ENCODE measurements at regions of chr19 and their contacts with region 1.

Region 1: DNA sequence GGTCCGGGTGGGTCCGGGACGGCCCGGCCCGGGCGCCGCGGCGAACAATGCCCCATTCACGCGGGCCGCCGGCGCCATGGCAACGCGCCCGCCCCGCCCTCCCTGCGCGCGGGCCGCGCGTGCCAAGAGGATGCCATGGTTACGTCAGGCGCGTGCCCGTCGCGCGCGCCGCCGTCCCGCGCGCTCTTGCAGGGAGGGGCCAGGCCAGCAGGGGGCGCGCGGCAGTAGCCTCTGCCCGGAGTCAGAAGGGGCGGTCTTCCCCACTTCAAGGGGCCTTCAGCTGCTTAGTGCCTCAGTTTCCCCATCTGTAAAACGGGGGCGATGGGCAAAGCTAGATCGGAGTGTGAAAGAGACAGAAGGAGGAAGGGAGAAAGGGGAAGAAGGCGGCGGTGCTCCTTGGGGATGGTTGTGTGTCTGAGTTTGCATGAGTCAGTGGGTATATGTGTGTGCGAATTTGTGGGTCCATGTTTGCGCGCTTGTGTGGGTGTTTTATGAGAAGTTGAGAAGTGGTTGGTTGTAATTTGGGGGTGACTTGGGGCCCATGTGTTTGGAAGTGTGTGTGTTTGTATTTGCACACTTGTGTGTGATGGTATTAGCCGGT is 11.6 kb upstream of the NFIX start:
- DNase-seq: no peak
- ATAC-seq: peak; percentile 71
- H3K4me3 ChIP-seq: 0 out of 2 replicates have a peak overlapping the region, but pooled peaks have one; percentile 16
- H3K27ac ChIP-seq: no peak overlapping the region
- H3K4me1 ChIP-seq: no peaks in the 10 kb centered on the region; the same call in 1 of the 2 replicates
- H3K27me3 ChIP-seq: peaks cover 0 to 3% of the 10 kb centered on the region in 2 experiments; a peak in 1 of 4 replicates
- CTCF ChIP-seq: peak; percentile 75 to 90 (median 81)
- EP300 ChIP-seq: no peak
- POLR2A ChIP-seq: no peak
- RAD21 ChIP-seq: peak; percentile 62

Region 2: GRCh38 chr19:12913851-12914690 is 69.6 kb before region 1 on chr19:
- CTCF ChIA-PET with region 1: no interaction called
- POLR2A ChIA-PET with region 1: no interaction called
- RAD21 ChIA-PET with region 1: no interaction called
- SMC1A ChIA-PET with region 1: no interaction called
- in situ Hi-C with region 1: no loop called
- intact Hi-C with region 1: no loop called
- DNase-seq: no peak
- ATAC-seq: peak; percentile 64; the same call in 2 of the 3 replicates
- H3K4me3 ChIP-seq: no peak overlapping the region
- H3K27ac ChIP-seq: no peak overlapping the region
- H3K4me1 ChIP-seq: peaks cover 10% of the 10 kb centered on the region
- H3K27me3 ChIP-seq: no peaks in the 10 kb centered on the region
- CTCF ChIP-seq: no peak
- EP300 ChIP-seq: no peak
- POLR2A ChIP-seq: peak; percentile 68
- RAD21 ChIP-seq: no peak

Region 3: GRCh38 chr19:12956446-12957388 is 26.9 kb before region 1 on chr19 and contains the start of gene GADD45GIP1:
- CTCF ChIA-PET with region 1: no interaction called
- POLR2A ChIA-PET with region 1: no interaction called
- RAD21 ChIA-PET with region 1: no interaction called
- SMC1A ChIA-PET with region 1: no interaction called
- in situ Hi-C with region 1: no loop called
- intact Hi-C with region 1: no loop called
- DNase-seq: peak; percentile 41
- ATAC-seq: peak; percentile 94
- H3K4me3 ChIP-seq: peak within 1 kb of the TSS; percentile 78
- H3K27ac ChIP-seq: peak within 1 kb of the TSS; percentile 71
- H3K4me1 ChIP-seq: peaks cover 11% of the 10 kb centered on the region
- H3K27me3 ChIP-seq: no peaks in the 10 kb centered on the region
- CTCF ChIP-seq: no peak
- EP300 ChIP-seq: no peak
- POLR2A ChIP-seq: peak; percentile 99
- RAD21 ChIP-seq: no peak
- polyA plus RNA-seq, gene GADD45GIP1: 5.1 to 13.4 TPM

Region 4: GRCh38 chr19:12994701-12995595 is 11.3 kb after region 1 on chr19 and contains the start of gene NFIX:
- CTCF ChIA-PET with region 1: no interaction called
- POLR2A ChIA-PET with region 1: no interaction called
- RAD21 ChIA-PET with region 1: no interaction called
- SMC1A ChIA-PET with region 1: no interaction called
- in situ Hi-C with region 1: no loop called
- intact Hi-C with region 1: no loop called
- DNase-seq: no peak
- ATAC-seq: peak; percentile 51
- H3K4me3 ChIP-seq: peak within 1 kb of the TSS; percentile 18; the same call in 1 of the 2 replicates
- H3K27ac ChIP-seq: no peak within 1 kb of the TSS
- H3K4me1 ChIP-seq: no peaks in the 10 kb centered on the region
- H3K27me3 ChIP-seq: peaks cover 4 to 6% of the 10 kb centered on the region in 2 experiments; a peak in 3 of 4 replicates
- CTCF ChIP-seq: no peak
- EP300 ChIP-seq: no peak
- POLR2A ChIP-seq: no peak
- RAD21 ChIP-seq: no peak
- polyA plus RNA-seq, gene NFIX: 0.02 TPM

Region 5: DNA sequence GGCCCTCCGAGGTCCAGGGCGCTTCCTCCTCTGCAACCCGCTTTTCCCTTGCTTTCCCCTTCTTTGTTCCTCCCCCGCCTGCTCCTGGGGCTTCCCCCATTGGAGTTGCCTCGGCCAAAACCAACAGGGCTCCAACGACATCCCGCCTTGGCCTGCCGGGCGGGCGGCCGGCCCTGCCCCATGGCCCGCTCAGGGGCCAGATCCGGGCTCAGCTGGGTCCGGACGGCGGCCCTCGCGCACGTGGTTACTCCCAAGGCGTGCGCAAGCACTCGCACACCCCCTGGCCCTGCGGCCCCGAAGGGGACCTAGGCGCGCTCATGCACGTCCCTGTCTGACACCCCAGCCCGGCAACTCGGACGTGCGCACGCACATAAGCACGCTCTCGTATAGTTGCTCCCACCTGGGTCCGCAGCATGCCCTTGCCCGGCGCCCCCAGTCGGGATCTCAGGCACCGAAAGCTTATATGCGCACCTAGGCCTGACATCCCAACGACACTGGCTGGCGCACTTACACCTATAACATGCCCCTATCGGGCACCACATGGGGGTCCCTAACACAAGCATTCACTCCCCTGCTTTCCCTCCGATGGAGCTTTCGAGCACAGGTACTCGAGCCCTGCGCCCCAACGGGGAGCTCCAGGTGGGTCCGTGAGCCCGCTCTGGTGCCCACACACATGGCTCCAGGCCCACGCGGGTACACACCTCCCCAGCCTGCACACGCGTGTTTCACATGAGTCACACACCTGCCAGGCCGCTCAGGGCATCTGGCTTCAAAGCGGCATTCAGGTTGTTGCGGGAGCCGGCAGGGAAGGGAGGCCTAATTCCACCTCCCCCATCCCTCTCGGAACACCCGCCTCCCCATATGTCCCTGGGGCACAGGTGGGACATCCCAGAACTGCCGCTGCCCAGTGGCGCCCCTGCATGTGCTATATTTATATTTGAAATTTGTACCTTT is 26.7 kb after region 1 on chr19:
- CTCF ChIA-PET with region 1: no interaction called
- POLR2A ChIA-PET with region 1: no interaction called
- RAD21 ChIA-PET with region 1: no interaction called
- SMC1A ChIA-PET with region 1: no interaction called
- in situ Hi-C with region 1: no loop called
- intact Hi-C with region 1: no loop called
- DNase-seq: no peak
- ATAC-seq: no peak
- H3K4me3 ChIP-seq: no peak overlapping the region
- H3K27ac ChIP-seq: no peak overlapping the region
- H3K4me1 ChIP-seq: peaks cover 6% of the 10 kb centered on the region; the same call in 1 of the 2 replicates
- H3K27me3 ChIP-seq: peaks cover 13 to 30% of the 10 kb centered on the region in 2 experiments
- CTCF ChIP-seq: no peak
- EP300 ChIP-seq: no peak
- POLR2A ChIP-seq: no peak
- RAD21 ChIP-seq: no peak

Region 6: DNA sequence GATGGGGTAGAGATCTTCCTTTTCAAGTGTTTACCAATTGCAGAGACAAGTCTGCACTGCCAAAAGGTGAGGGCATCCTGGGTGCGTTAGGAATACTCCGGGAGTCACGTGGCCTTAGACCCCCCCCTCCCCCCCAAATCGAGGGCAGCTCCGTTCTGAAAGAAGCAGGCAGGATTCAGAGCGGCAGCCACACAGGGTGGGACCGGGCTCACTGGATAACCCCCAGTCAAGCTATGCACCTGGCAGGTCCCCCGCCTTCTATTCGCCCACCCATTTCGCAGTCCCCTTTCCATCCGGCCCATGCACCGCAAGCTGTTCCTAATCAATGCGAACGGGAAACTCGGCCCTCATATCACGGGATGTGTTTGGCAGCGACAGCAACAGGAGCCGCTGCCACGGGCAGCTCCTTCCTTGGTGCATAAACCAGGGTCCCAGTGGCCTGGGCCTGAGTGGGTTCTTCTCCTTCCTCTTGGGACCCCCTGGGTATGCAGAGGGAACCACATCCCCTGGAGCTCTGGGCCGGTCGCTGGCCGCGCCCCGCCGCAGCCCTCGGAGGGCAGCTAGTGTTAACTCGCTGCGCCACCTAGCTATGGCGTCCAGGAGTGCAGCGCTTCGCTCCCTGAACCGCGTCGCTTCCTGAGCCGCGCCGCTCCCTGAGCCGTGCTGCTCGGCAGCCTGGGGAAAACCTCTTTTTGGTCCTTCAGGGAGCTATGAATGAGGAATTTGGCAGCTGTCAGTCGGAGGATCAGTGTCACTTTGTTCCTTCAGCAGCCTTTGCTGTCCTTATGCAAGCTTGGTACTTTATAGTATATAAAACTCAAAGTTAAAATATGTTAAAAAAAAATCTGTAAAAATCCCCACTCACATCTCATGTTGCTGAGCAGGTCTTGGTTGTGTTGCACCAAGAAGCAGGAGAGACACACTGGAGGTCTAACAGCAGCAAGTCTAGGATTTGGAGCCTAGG is 77.6 kb after region 1 on chr19:
- CTCF ChIA-PET with region 1: interaction called, 247 read pairs
- POLR2A ChIA-PET with region 1: no interaction called
- RAD21 ChIA-PET with region 1: interaction called, 19 read pairs
- SMC1A ChIA-PET with region 1: interaction called, 45 read pairs
- in situ Hi-C with region 1: no loop called
- intact Hi-C with region 1: loop called (anchors 2 kb)
- DNase-seq: peak; percentile 11
- ATAC-seq: peak; percentile 99
- H3K4me3 ChIP-seq: peak overlapping the region; percentile 34; the same call in 1 of the 2 replicates
- H3K27ac ChIP-seq: no peak overlapping the region
- H3K4me1 ChIP-seq: no peaks in the 10 kb centered on the region
- H3K27me3 ChIP-seq: peaks cover 9 to 11% of the 10 kb centered on the region in 2 experiments
- CTCF ChIP-seq: peak; percentile 94 to 97 (median 96); a peak in 5 of 6 replicates
- EP300 ChIP-seq: no peak
- POLR2A ChIP-seq: no peak
- RAD21 ChIP-seq: peak; percentile 80

Region 7: DNA sequence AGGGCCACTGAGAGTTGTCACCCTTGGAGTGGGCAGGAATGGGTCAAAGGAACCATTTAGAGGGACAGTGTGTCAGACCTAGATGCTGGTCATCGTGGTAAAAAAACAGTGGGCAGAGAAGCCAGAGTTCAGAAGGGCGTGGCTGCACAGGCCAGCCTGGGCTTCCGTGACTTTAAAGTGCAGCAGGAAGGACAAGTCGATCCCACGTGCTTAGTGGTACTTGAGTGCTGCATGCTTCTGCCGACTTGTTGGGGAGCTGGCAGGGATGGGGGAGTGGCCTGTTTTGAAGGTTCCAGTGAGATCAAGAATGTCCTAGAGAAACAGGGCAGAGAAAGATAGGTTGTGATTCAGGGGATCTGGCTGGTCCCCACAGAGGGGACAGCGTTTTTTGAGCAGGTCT is 102.0 kb after region 1 on chr19:
- CTCF ChIA-PET with region 1: interaction called, 145 read pairs
- POLR2A ChIA-PET with region 1: no interaction called
- RAD21 ChIA-PET with region 1: no interaction called
- SMC1A ChIA-PET with region 1: no interaction called
- in situ Hi-C with region 1: loop called (anchors 5 kb)
- intact Hi-C with region 1: no loop called
- DNase-seq: no peak
- ATAC-seq: no peak
- H3K4me3 ChIP-seq: no peak overlapping the region
- H3K27ac ChIP-seq: no peak overlapping the region
- H3K4me1 ChIP-seq: no peaks in the 10 kb centered on the region
- H3K27me3 ChIP-seq: no peaks in the 10 kb centered on the region; a peak in 2 of 4 replicates
- CTCF ChIP-seq: no peak
- EP300 ChIP-seq: no peak
- POLR2A ChIP-seq: no peak
- RAD21 ChIP-seq: no peak